ENCODE measurements at regions of chr7 and their contacts with region 1.

Region 1: GRCh38 chr7:35906191-35906908 is 105.5 kb downstream of the SEPTIN7 start:
- DNase-seq: peak; percentile 80

Region 2: GRCh38 chr7:35716038-35716803 is 190.1 kb before region 1 on chr7:
- in situ Hi-C with region 1: loop called (anchors 25 kb)
- DNase-seq: no peak

Measured in KBM-7 (cell line).